IMR-90 (cell line): ENCODE measurements at regions of chr12 and their contacts with region 1.

Region 1: DNA sequence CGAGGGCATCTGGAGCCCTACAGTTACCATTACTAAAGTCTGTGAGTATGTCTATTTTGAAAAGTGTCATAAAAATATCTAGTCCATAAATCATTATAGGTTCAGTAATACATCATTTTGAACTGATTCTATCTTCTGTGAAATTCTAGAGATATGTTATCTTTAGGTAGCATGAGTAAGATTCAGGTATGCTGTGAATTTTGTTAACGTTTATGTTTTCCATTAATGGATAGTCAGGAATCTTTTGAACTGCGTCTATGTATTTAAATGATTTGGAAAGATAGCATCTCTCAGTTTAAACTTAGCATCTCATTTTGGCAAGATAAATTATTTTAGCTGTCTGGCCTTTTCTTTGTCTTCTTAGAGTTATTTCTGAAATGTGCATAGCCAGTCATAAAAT is 8.3 kb downstream of the ALG10B start:
- DNase-seq: no peak
- ATAC-seq: no peak
- H3K4me3 ChIP-seq: no peak overlapping the region
- H3K27ac ChIP-seq: no peak overlapping the region
- H3K4me1 ChIP-seq: no peaks in the 10 kb centered on the region
- H3K27me3 ChIP-seq: no peaks in the 10 kb centered on the region
- CTCF ChIP-seq: no peak
- POLR2A ChIP-seq: no peak
- RAD21 ChIP-seq: no peak

Region 2: DNA sequence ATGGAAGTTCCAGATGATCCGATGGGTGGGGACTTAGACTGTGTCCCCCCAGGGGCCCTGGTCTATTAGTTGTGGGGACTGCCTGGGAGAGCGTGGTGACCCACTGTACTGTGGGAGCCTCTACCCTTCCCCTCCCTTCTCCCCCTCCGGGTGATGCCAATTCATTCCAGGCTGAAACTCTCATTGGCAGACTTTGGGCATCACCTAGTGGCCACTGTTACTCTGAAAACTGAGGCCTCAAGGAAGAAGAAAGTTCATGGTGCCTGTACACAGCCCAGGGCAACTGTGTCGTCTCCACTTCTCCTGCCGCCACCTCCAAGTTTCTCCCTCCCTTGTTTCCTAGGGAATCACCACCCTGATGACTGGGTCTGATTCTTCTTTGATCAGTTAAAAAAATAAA is 181.9 kb before region 1 on chr12:
- CTCF ChIA-PET with region 1: no interaction called
- POLR2A ChIA-PET with region 1: no interaction called
- dilution Hi-C with region 1: no loop called
- in situ Hi-C with region 1: no loop called
- intact Hi-C with region 1: no loop called
- DNase-seq: no peak
- ATAC-seq: no peak
- H3K4me3 ChIP-seq: no peak overlapping the region
- H3K27ac ChIP-seq: no peak overlapping the region
- H3K4me1 ChIP-seq: no peaks in the 10 kb centered on the region
- H3K27me3 ChIP-seq: no peaks in the 10 kb centered on the region
- CTCF ChIP-seq: no peak
- POLR2A ChIP-seq: no peak
- RAD21 ChIP-seq: no peak

Region 3: GRCh38 chr12:38370311-38370710 is 45.4 kb after region 1 on chr12:
- CTCF ChIA-PET with region 1: no interaction called
- POLR2A ChIA-PET with region 1: no interaction called
- dilution Hi-C with region 1: no loop called
- in situ Hi-C with region 1: no loop called
- intact Hi-C with region 1: no loop called
- DNase-seq: no peak
- ATAC-seq: no peak
- H3K4me3 ChIP-seq: no peak overlapping the region
- H3K27ac ChIP-seq: no peak overlapping the region
- H3K4me1 ChIP-seq: no peaks in the 10 kb centered on the region
- H3K27me3 ChIP-seq: no peaks in the 10 kb centered on the region
- CTCF ChIP-seq: no peak
- POLR2A ChIP-seq: no peak
- RAD21 ChIP-seq: no peak

Region 4: DNA sequence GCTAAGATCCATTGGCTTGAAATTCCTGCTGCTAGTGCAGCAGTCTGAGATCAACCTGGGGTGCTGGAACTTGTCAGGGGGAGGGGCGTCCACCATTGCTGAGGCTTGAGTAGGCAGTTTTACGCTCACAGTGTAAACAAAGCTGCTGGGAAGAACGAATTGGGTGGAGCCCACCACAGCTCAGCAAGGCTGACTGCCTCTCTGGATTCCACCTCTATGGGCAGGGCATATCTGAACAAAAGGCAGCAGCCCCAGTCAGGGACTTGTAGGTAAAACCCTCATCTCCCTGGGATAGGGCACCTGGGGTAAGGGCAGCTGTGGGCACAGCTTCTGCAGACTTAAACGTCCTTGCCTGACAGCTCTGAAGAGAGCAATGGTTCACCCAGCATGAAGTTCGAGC is 183.3 kb after region 1 on chr12:
- CTCF ChIA-PET with region 1: no interaction called
- POLR2A ChIA-PET with region 1: no interaction called
- dilution Hi-C with region 1: no loop called
- in situ Hi-C with region 1: no loop called
- intact Hi-C with region 1: no loop called
- DNase-seq: no peak
- ATAC-seq: no peak
- H3K4me3 ChIP-seq: no peak overlapping the region
- H3K27ac ChIP-seq: no peak overlapping the region
- H3K4me1 ChIP-seq: no peaks in the 10 kb centered on the region
- H3K27me3 ChIP-seq: no peaks in the 10 kb centered on the region
- CTCF ChIP-seq: no peak
- POLR2A ChIP-seq: no peak
- RAD21 ChIP-seq: no peak

Region 5: GRCh38 chr12:38555620-38556596 is 231.0 kb after region 1 on chr12:
- CTCF ChIA-PET with region 1: no interaction called
- POLR2A ChIA-PET with region 1: no interaction called
- dilution Hi-C with region 1: no loop called
- in situ Hi-C with region 1: no loop called
- intact Hi-C with region 1: no loop called
- DNase-seq: no peak
- ATAC-seq: no peak
- H3K4me3 ChIP-seq: no peak overlapping the region
- H3K27ac ChIP-seq: no peak overlapping the region
- H3K4me1 ChIP-seq: no peaks in the 10 kb centered on the region
- H3K27me3 ChIP-seq: no peaks in the 10 kb centered on the region
- CTCF ChIP-seq: no peak
- POLR2A ChIP-seq: no peak
- RAD21 ChIP-seq: no peak

Region 6: GRCh38 chr12:39103552-39104165 is 778.8 kb after region 1 on chr12:
- CTCF ChIA-PET with region 1: no interaction called
- POLR2A ChIA-PET with region 1: no interaction called
- dilution Hi-C with region 1: no loop called
- in situ Hi-C with region 1: no loop called
- intact Hi-C with region 1: loop called (anchors 5 kb)
- DNase-seq: no peak
- ATAC-seq: 0 out of 2 replicates have a peak, but pooled peaks have one; percentile 44
- H3K4me3 ChIP-seq: no peak overlapping the region
- H3K27ac ChIP-seq: no peak overlapping the region
- H3K4me1 ChIP-seq: no peaks in the 10 kb centered on the region
- H3K27me3 ChIP-seq: no peaks in the 10 kb centered on the region
- CTCF ChIP-seq: peak; percentile 31; the same call in 1 of the 2 replicates
- POLR2A ChIP-seq: no peak
- RAD21 ChIP-seq: peak; percentile 34; the same call in 1 of the 2 replicates

Region 7: GRCh38 chr12:39272871-39273770 is 948.2 kb after region 1 on chr12:
- CTCF ChIA-PET with region 1: interaction called, 3 read pairs
- POLR2A ChIA-PET with region 1: no interaction called
- dilution Hi-C with region 1: no loop called
- in situ Hi-C with region 1: loop called (anchors 10 kb)
- intact Hi-C with region 1: loop called (anchors 2 kb)
- DNase-seq: peak; percentile 3
- ATAC-seq: no peak
- H3K4me3 ChIP-seq: no peak overlapping the region
- H3K27ac ChIP-seq: no peak overlapping the region
- H3K4me1 ChIP-seq: no peaks in the 10 kb centered on the region
- H3K27me3 ChIP-seq: no peaks in the 10 kb centered on the region
- CTCF ChIP-seq: peak; percentile 52
- POLR2A ChIP-seq: no peak
- RAD21 ChIP-seq: no peak

Region 8: GRCh38 chr12:39990122-39991101 is 1665.5 kb after region 1 on chr12:
- CTCF ChIA-PET with region 1: no interaction called
- POLR2A ChIA-PET with region 1: no interaction called
- dilution Hi-C with region 1: no loop called
- in situ Hi-C with region 1: no loop called
- intact Hi-C with region 1: loop called (anchors 5 kb)
- DNase-seq: peak; percentile 32
- ATAC-seq: peak; percentile 93
- H3K4me3 ChIP-seq: no peak overlapping the region
- H3K27ac ChIP-seq: no peak overlapping the region
- H3K4me1 ChIP-seq: no peaks in the 10 kb centered on the region
- H3K27me3 ChIP-seq: no peaks in the 10 kb centered on the region
- CTCF ChIP-seq: peak; percentile 79
- POLR2A ChIP-seq: no peak
- RAD21 ChIP-seq: peak; percentile 66